ENCODE measurements at regions of chr19 and their contacts with region 1.

Region 1: GRCh38 chr19:37506387-37507166 is at the start of gene ZNF793:
- DNase-seq: peak; percentile 92
- ATAC-seq: peak; percentile 85
- H3K4me3 ChIP-seq: peak within 1 kb of the TSS; percentile 63 to 99 (median 83)
- H3K4me3 Mint-ChIP-seq: no peak within 1 kb of the TSS
- H3K27ac ChIP-seq: peak within 1 kb of the TSS; percentile 91 to 92
- H3K27ac Mint-ChIP-seq: no peak within 1 kb of the TSS
- H3K4me1 ChIP-seq: peaks cover 14 to 16% of the 10 kb centered on the region in 2 donors
- H3K4me1 Mint-ChIP-seq: peaks cover 2% of the 10 kb centered on the region
- H3K27me3 ChIP-seq: no peaks in the 10 kb centered on the region
- H3K27me3 Mint-ChIP-seq: no peaks in the 10 kb centered on the region
- CTCF ChIP-seq: no peak
- total RNA-seq, gene ZNF793: 12.2 and 12.7 TPM in 2 replicates

Region 2: DNA sequence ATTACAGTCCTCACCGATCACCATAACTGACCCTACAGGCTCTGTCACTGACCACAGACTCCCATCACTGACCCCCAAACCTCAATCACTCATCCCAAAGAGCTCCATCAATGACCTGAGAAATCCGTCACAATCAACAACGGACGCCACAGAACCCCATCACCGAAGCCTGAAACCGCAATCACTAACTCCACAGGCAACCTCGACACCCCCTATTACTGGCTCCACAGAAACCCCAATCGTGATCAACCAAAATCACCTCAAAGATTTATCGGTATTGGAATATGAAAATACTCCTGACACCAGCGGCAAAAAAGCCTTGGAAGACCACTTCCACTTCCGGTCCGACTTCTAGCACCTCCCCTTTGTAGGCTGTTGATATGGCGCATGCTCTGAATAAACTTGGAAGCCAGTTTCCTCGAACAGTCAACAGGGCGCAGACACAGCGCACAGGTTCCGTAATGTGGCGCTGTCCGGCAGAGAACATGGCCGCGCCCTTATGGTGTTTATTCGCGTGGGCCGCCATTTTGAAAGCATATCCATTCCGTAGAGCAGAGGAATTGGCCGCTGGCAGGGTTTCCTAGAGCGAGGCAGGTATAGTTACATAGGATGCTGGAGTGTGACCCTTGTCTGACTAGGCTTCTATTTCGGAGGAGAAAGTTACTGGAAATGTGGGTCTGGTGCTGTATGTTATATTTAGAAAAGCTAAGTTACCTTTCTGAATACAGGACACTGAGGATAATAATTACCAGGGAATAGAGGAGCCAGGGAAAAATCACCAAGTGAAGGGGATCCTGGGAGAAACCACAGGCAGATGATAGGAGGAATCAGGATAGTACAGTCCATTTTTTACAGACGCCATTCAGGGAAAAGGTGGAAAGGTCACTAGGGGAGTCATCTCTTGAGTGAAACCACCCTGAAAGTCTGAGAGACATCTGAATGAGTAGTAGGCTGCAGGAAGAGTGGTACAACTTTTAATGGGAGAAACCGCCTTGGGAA is 333.9 kb before region 1 on chr19 and contains the start of gene ZNF585A:
- CTCF ChIA-PET with region 1: no interaction called
- POLR2A ChIA-PET with region 1: no interaction called
- intact Hi-C with region 1: loop called (anchors 2 kb)
- DNase-seq: peak; percentile 96
- ATAC-seq: peak; percentile 100
- H3K4me3 ChIP-seq: peak within 1 kb of the TSS; percentile 72 to 96 (median 82)
- H3K4me3 Mint-ChIP-seq: no peak within 1 kb of the TSS
- H3K27ac ChIP-seq: peak within 1 kb of the TSS; percentile 70 to 89
- H3K27ac Mint-ChIP-seq: no peak within 1 kb of the TSS
- H3K4me1 ChIP-seq: peaks cover 5 to 7% of the 10 kb centered on the region in 2 donors
- H3K4me1 Mint-ChIP-seq: peaks cover 3% of the 10 kb centered on the region
- H3K27me3 ChIP-seq: no peaks in the 10 kb centered on the region
- H3K27me3 Mint-ChIP-seq: no peaks in the 10 kb centered on the region
- CTCF ChIP-seq: peak; percentile 23
- total RNA-seq, gene ZNF585A: 20.0 and 22.0 TPM in 2 replicates

Region 3: GRCh38 chr19:37370880-37371661 is 135.5 kb before region 1 on chr19 and contains the start of gene ZNF527:
- CTCF ChIA-PET with region 1: interaction called, 4 read pairs
- POLR2A ChIA-PET with region 1: interaction called, 7 read pairs
- intact Hi-C with region 1: loop called (anchors 2 kb)
- DNase-seq: peak; percentile 98
- ATAC-seq: peak; percentile 96
- H3K4me3 ChIP-seq: peak within 1 kb of the TSS; percentile 59 to 87 (median 79)
- H3K4me3 Mint-ChIP-seq: peak within 1 kb of the TSS; percentile 99
- H3K27ac ChIP-seq: peak within 1 kb of the TSS; percentile 73 to 87
- H3K27ac Mint-ChIP-seq: peak within 1 kb of the TSS; percentile 98
- H3K4me1 ChIP-seq: peaks cover 5 to 14% of the 10 kb centered on the region in 2 donors
- H3K4me1 Mint-ChIP-seq: peaks cover 12% of the 10 kb centered on the region
- H3K27me3 ChIP-seq: no peaks in the 10 kb centered on the region
- H3K27me3 Mint-ChIP-seq: no peaks in the 10 kb centered on the region
- CTCF ChIP-seq: peak; percentile 12
- total RNA-seq, gene ZNF527: 9.0 and 11.4 TPM in 2 replicates

Region 4: DNA sequence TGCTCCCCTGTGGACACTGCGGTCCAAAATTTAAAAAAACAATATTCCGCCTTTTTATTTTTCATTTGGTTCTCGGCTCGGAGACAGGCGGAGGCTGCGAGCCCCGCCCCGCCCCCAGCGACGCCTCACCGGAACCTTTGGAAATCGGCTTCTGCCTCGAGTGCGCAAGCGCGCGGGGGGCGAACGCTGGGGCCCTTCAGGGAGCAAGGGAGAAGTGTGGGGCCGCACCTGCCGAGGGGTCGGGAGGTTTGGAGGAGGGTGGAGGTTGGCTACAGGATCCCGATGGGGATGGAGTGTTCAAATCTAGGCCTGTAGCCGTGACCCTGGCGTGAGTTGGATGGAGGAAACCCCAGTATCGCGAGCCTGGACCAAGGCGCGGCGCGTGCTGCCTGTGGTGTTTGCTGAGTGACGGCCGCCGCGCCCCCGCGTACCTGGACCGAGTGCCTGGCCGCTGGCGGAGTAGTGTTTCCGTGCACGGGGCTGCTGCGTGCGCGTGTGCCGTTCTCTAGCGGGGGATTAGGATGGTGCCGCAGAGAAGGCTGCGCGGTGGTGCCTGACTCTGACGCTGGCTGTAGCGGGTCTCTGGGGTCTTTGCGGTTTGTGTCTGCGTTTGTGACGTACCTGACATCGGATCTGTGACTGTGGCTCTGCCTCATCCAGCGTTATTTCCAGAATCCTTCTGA is 149.3 kb after region 1 on chr19:
- CTCF ChIA-PET with region 1: no interaction called
- POLR2A ChIA-PET with region 1: no interaction called
- intact Hi-C with region 1: loop called (anchors 1 kb)
- DNase-seq: peak; percentile 89
- ATAC-seq: peak; percentile 69
- H3K4me3 ChIP-seq: peak overlapping the region; percentile 36 to 89 (median 80)
- H3K4me3 Mint-ChIP-seq: peak overlapping the region; percentile 98
- H3K27ac ChIP-seq: peak overlapping the region; percentile 91 to 93
- H3K27ac Mint-ChIP-seq: peak overlapping the region; percentile 97
- H3K4me1 ChIP-seq: peaks cover 15 to 19% of the 10 kb centered on the region in 2 donors
- H3K4me1 Mint-ChIP-seq: peaks cover 30% of the 10 kb centered on the region
- H3K27me3 ChIP-seq: no peaks in the 10 kb centered on the region
- H3K27me3 Mint-ChIP-seq: no peaks in the 10 kb centered on the region
- CTCF ChIP-seq: no peak

Region 5: DNA sequence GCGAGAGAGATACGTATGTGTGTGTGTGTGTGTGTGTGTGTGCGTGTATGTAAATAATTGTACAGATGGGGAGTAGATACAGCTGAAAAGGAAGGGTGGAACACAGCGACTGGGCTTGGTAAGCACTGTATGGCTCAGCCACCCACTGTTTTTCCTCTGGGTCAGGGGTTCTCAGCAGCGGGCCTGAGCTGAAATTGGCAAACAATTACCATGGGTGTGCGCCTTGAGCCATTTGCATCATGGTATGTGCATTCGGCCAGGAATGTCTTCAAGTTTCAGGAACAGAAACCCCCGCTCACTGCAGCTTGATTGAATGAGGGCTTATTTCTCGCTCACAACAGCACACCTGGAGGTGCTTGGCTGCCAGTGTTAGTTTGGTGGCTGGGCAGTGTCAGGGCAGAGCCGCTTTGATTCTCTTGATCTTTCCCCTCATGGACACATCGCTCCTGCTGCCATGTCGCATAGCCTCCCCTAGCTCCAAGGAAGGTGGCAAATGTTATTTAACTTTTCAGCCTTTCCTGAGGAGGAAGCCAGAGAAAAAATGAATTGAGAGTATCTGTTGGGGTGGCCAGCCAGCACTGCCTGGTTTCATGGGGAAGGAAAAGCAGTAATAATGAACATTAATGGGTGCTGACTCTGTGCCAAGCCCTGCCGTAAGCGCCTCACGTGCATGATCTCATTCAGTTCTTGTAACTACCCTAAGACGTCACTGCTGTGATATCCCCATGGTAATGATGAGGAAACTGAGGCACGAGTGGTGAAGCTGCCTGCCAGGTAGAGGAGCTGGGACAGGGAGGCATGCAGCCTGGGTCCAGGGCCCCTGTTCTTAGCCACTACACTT is 527.3 kb after region 1 on chr19:
- CTCF ChIA-PET with region 1: no interaction called
- POLR2A ChIA-PET with region 1: no interaction called
- intact Hi-C with region 1: loop called (anchors 10 kb)
- DNase-seq: peak; percentile 93
- ATAC-seq: peak; percentile 79
- H3K4me3 ChIP-seq: peak overlapping the region in 3 of 5 experiments; percentile 16 to 43 (median 36)
- H3K4me3 Mint-ChIP-seq: peak overlapping the region; percentile 86
- H3K27ac ChIP-seq: peak overlapping the region; percentile 84 to 93
- H3K27ac Mint-ChIP-seq: peak overlapping the region; percentile 99
- H3K4me1 ChIP-seq: peaks cover 63 to 87% of the 10 kb centered on the region in 2 donors
- H3K4me1 Mint-ChIP-seq: peaks cover 81% of the 10 kb centered on the region
- H3K27me3 ChIP-seq: no peaks in the 10 kb centered on the region
- H3K27me3 Mint-ChIP-seq: no peaks in the 10 kb centered on the region
- CTCF ChIP-seq: peak; percentile 65

Region 6: GRCh38 chr19:38061294-38061693 is 554.7 kb after region 1 on chr19:
- CTCF ChIA-PET with region 1: no interaction called
- POLR2A ChIA-PET with region 1: no interaction called
- intact Hi-C with region 1: no loop called
- DNase-seq: no peak
- ATAC-seq: no peak
- H3K4me3 ChIP-seq: no peak overlapping the region
- H3K4me3 Mint-ChIP-seq: no peak overlapping the region
- H3K27ac ChIP-seq: peak overlapping the region in 1 of 2 donors; percentile 28
- H3K27ac Mint-ChIP-seq: peak overlapping the region; percentile 83
- H3K4me1 ChIP-seq: peaks cover 27 to 51% of the 10 kb centered on the region in 2 donors
- H3K4me1 Mint-ChIP-seq: peaks cover 55% of the 10 kb centered on the region
- H3K27me3 ChIP-seq: no peaks in the 10 kb centered on the region
- H3K27me3 Mint-ChIP-seq: no peaks in the 10 kb centered on the region
- CTCF ChIP-seq: no peak